HCT116 (cell line): ENCODE measurements at regions of chr14 and their contacts with region 1.

Region 1: DNA sequence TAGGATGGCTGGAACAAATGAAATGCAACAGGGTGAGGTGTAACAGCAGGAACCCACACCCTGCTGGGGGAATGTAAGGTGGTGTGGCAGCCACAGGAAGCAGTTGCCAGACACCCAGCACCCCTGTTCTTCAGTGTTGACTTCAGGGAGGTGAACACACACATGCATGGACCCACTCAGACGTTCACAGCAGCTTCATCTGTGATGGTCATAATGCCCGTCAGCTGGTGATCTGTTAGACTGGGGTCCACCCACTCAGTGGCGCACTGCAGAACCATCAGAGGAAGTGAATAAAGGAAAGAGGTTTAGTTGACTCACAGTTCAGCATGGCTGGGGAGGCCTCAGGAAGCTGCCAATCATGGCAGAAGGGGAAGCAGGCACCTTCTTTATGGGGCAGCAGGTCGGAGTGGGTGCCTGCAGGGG is 22.7 kb upstream of the TEX22 start:
- DNase-seq: no peak
- ATAC-seq: no peak
- H3K4me3 ChIP-seq: no peak overlapping the region
- H3K27ac ChIP-seq: no peak overlapping the region
- H3K4me1 ChIP-seq: peaks cover 4 to 8% of the 10 kb centered on the region in 2 experiments; a peak in 3 of 4 replicates
- H3K27me3 ChIP-seq: no peaks in the 10 kb centered on the region
- CTCF ChIP-seq: no peak
- POLR2A ChIP-seq: no peak
- RAD21 ChIP-seq: no peak

Region 2: DNA sequence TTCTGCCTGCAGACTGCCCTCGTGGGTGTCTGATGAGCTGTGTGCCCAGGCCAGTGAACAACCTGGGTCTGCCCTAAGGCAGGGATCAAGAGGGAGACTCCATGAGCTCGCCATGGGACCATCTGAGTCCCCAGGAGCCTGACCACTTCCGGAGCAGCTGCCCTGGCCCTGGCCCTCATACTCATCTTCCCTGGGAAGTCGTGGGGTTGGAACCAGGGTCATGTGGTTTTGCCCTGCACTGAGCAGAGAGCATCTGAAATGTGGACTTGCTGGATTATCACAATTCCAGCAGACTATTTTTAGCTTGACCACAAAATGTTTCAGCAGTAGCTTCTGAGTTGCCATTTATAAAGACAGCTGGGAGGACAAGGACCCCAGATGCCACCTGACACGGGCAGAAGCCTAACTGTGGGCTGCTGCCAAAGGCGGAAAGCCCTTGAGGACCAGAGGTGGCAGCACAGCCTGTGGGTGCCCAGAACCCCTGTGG is 120.6 kb before region 1 on chr14:
- CTCF ChIA-PET with region 1: no interaction called
- POLR2A ChIA-PET with region 1: no interaction called
- RAD21 ChIA-PET with region 1: no interaction called
- intact Hi-C with region 1: no loop called
- DNase-seq: no peak
- ATAC-seq: no peak
- H3K4me3 ChIP-seq: no peak overlapping the region
- H3K27ac ChIP-seq: no peak overlapping the region
- H3K4me1 ChIP-seq: no peaks in the 10 kb centered on the region
- H3K27me3 ChIP-seq: no peaks in the 10 kb centered on the region
- CTCF ChIP-seq: no peak
- POLR2A ChIP-seq: no peak
- RAD21 ChIP-seq: no peak

Region 3: GRCh38 chr14:105490572-105491366 is 115.1 kb after region 1 on chr14 and contains the start of gene TEDC1:
- CTCF ChIA-PET with region 1: interaction called, 77 read pairs
- POLR2A ChIA-PET with region 1: interaction called, 10 read pairs
- RAD21 ChIA-PET with region 1: interaction called, 4 to 8 read pairs
- intact Hi-C with region 1: loop called (anchors 1 kb)
- DNase-seq: peak; percentile 100
- ATAC-seq: peak; percentile 78
- H3K4me3 ChIP-seq: peak within 1 kb of the TSS; percentile 74 to 87
- H3K27ac ChIP-seq: peak within 1 kb of the TSS; percentile 100
- H3K4me1 ChIP-seq: peaks cover 20 to 49% of the 10 kb centered on the region in 2 experiments
- H3K27me3 ChIP-seq: no peaks in the 10 kb centered on the region
- CTCF ChIP-seq: peak in 2 of 3 experiments; percentile 50 to 71; a peak in 4 of 6 replicates
- POLR2A ChIP-seq: peak; percentile 70
- RAD21 ChIP-seq: no peak
- total RNA-seq, gene TEDC1: 40.4 TPM